Head of caudate nucleus (tissue), 42 donors: ENCODE measurements at regions of chrX and their contacts with region 1.

Region 1: GRCh38 chrX:106952988-106953387 is 32.8 kb downstream of the CLDN2 start:
- DNase-seq: no peak

Region 2: GRCh38 chrX:106898462-106898861 is 54.5 kb before region 1 on chrX:
- intact Hi-C with region 1: loop called (anchors 5 kb)
- DNase-seq: peak in 3 of 42 donors; percentile 9 to 39 (median 18)

Region 3: GRCh38 chrX:106917830-106918500 is 35.0 kb before region 1 on chrX:
- intact Hi-C with region 1: no loop called
- DNase-seq: no peak